Lower leg skin (tissue), 4 donors: ENCODE measurements at regions of chr1 and their contacts with region 1.

Region 1: GRCh38 chr1:205485338-205486228 is 18.9 kb upstream of the CDK18 start:
- DNase-seq: no peak
- H3K4me3 ChIP-seq: no peak overlapping the region
- CTCF ChIP-seq: peak in 1 of 3 donors; percentile 83
- POLR2A ChIP-seq: no peak

Region 2: DNA sequence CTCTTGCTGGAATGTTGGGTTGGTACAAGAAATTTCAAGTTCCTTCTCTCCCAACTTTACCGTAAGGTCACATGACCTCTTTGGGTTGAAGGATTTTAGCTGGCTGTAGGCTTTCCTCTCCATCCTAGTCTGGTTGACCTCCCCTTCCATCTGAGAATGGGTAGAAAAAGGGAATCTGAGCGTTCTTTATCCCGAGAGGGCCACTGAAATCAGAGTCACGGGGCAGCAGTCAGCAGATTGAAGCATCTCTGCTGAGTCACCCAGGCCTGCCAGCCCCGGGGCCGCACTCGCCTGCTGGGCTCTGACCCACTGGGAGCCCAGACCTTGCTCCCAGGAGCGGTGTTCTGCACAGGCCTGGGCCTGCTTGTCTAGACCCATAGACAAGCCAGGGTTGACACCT is 226.9 kb before region 1 on chr1:
- intact Hi-C with region 1: no loop called
- DNase-seq: no peak
- H3K4me3 ChIP-seq: no peak overlapping the region
- CTCF ChIP-seq: no peak
- POLR2A ChIP-seq: no peak

Region 3: DNA sequence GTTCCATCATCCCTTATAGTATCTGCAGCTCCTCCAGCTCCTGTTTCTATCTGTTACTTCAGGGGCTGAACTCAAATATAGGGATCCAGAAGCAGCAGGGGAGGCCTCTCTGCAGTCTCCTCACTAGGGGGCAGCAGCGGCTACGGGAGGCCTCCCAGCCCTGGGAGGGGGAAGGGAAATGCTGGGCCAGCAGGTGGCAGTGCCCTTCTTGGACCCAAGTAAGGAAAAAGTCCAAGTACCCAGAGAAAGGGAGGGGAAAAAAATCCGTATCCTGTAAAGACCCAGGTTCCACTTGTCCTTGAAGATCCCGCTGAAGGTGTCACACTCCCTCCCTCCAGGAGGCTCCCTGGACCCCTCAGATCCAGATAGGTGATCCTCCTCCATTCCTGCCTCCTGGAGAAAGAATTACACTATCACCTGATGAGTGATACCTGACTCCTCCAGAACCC is 149.9 kb before region 1 on chr1:
- intact Hi-C with region 1: loop called (anchors 10 kb)
- DNase-seq: peak in 1 of 2 donors; percentile 33
- H3K4me3 ChIP-seq: no peak overlapping the region
- CTCF ChIP-seq: peak in 1 of 3 donors; percentile 70
- POLR2A ChIP-seq: no peak

Region 4: DNA sequence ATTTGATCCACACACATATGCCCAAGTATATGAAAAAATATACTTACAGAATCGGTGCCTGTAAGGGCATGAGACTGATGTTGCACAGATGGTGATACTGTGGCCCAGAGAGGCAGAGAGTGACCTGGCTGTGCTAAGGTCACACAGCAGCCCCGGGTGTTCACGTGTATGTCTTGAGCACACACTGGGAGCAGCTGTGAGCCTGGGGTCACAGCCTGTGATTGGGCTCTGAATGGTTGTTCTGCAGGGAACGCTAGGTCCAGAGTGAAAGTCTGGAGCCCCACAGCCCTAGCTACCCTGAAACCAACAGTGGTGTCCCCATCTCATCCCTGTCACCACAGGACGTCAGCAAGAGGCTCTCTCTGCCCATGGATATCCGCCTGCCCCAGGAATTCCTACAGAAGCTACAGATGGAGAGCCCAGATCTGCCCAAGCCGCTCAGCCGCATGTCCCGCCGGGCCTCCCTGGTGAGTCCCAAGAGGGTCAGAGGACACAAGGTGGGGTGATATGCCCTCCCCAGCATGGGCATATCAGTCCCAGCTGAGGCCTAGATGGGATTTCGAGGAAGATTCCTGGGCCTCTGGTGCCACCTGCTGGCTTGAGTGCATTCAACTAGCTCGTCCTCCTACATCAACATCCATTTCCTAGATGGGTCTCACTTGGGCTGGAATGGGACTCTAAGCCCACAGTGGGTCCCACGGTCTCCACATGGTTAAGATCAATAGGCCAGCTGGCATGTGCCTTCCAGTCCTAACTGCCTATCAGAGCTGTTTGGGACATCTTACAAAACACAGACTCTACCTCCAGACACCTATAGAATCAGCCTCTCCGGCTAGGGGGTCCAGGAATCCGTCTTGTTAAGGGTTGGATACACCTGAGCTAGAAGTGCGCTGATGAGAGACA is 38.6 kb after region 1 on chr1:
- intact Hi-C with region 1: loop called (anchors 5 kb)
- DNase-seq: peak; percentile 63 to 93
- H3K4me3 ChIP-seq: no peak overlapping the region
- CTCF ChIP-seq: peak in 1 of 3 donors; percentile 31
- POLR2A ChIP-seq: no peak